ENCODE measurements at regions of chr2 and their contacts with region 1.

Region 1: GRCh38 chr2:45643543-45644542 is 7.6 kb upstream of the PRKCE start:
- DNase-seq: peak; percentile 52 to 75 (median 70)
- ATAC-seq: peak; percentile 93
- H3K4me3 ChIP-seq: no peak overlapping the region
- H3K27ac ChIP-seq: no peak overlapping the region
- H3K4me1 ChIP-seq: peaks cover 21% of the 10 kb centered on the region
- H3K27me3 ChIP-seq: no peaks in the 10 kb centered on the region
- CTCF ChIP-seq: peak; percentile 88 to 99 (median 97)
- POLR2A ChIP-seq: no peak

Region 2: DNA sequence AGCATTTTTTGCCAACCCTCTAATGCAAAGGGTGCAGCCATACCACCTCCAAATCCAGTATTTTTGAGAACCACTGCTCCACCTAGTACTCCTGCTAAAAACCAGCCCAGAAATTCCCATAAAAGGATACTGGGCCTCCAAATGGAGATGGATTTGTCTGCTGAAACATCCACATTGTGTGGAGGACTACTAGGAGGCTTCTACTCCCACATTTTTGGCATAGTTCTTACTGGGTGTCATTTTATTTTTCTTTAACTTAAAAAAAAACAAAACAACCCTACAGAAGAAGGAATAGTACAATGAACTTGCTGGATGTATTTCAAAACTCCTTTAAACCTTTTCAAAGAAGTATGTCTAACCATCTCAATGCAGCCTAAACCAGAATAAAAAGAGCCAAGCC is 252.0 kb before region 1 on chr2:
- intact Hi-C with region 1: no loop called
- DNase-seq: no peak
- ATAC-seq: no peak
- H3K4me3 ChIP-seq: no peak overlapping the region
- H3K27ac ChIP-seq: no peak overlapping the region
- H3K4me1 ChIP-seq: peaks cover 7% of the 10 kb centered on the region
- H3K27me3 ChIP-seq: no peaks in the 10 kb centered on the region
- CTCF ChIP-seq: no peak
- POLR2A ChIP-seq: no peak

Region 3: DNA sequence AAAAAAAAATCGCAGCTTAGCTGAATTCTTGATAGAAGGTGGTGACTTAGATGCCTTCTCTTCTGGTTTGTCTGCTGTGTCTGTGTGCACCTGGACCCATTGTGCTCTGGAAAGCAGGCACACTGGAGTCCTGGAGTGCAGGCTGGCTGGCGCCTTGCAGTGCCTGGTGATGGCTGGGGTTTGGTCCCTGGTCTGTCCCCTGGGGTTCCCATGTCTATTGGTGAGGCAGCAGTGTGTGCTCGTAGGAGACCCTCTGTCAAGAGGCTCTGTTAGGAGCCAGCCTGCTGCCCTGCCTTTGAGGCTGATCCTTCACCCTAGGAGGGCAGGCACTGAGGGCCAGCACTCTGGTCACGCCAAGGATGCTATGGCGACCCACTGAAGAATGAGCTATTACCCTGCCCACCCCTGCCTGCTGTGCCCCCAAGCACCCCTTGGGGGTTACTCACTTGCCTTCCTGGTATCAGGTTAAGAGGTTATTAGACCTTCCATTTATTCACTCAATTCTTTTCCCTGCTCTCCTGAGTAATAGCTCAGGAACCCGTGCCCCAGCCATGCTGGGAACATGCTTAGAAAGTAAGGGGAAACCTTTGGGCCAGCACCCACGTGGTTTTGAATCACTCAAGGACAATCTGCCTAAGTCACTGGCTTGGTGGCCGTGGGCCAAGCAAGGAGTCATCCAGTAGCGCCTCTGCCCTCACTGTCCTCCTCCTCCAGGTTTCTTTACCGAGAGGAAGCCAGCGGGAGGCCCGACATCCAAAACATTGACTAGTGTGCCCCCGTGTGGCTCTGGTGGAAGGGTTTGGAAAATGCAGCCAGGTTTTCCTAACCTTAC is 292.2 kb after region 1 on chr2:
- intact Hi-C with region 1: loop called (anchors 5 kb)
- DNase-seq: peak; percentile 90 to 96 (median 95)
- ATAC-seq: peak; percentile 81
- H3K4me3 ChIP-seq: no peak overlapping the region
- H3K27ac ChIP-seq: peak overlapping the region in 3 of 4 donors; percentile 4 to 53 (median 7)
- H3K4me1 ChIP-seq: peaks cover 31% of the 10 kb centered on the region
- H3K27me3 ChIP-seq: no peaks in the 10 kb centered on the region
- CTCF ChIP-seq: peak; percentile 58 to 93 (median 89)
- POLR2A ChIP-seq: no peak